ENCODE measurements at regions of chr18 and their contacts with region 1.

Region 1: DNA sequence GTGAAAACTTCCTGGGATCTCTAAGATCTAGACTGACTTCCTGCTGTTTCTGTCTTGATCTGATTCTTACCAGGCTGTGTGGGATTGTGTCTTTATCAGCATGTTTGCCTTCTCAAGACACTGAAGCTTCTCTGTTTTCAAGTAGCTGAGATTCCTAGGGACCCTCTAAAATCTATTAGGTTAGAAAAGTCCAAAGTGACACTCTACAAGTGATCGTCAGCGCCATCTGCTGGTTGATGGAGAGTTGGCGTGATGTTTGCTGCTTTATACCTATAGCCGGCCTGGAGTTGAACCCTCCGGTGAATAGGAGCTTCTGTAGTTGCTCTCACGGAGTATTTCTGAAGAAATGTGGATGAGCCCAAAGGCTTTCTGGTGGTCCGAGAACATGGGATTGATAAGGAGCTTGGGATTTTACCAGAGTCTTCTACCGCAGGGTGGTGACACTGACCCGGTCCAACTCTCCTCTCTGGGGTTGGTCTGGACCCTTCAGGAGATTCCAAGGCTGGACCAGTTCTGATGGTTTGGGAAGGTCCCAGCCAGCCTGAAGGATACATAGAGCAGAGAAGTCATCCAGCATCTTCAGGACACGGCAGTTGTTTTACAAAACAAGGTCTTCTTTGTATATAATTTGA is 96.0 kb upstream of the TTC39C start:
- DNase-seq: peak; percentile 79
- ATAC-seq: peak; percentile 70
- H3K4me3 ChIP-seq: no peak overlapping the region
- H3K4me3 Mint-ChIP-seq: no peak overlapping the region
- H3K27ac ChIP-seq: no peak overlapping the region
- H3K27ac Mint-ChIP-seq: no peak overlapping the region
- H3K4me1 ChIP-seq: peaks cover 0 to 6% of the 10 kb centered on the region in 2 donors
- H3K4me1 Mint-ChIP-seq: no peaks in the 10 kb centered on the region
- H3K27me3 ChIP-seq: no peaks in the 10 kb centered on the region
- H3K27me3 Mint-ChIP-seq: peaks cover 15% of the 10 kb centered on the region
- CTCF ChIP-seq: peak; percentile 97

Region 2: GRCh38 chr18:23619388-23619881 is 299.1 kb before region 1 on chr18:
- CTCF ChIA-PET with region 1: interaction called, 27 read pairs
- POLR2A ChIA-PET with region 1: no interaction called
- intact Hi-C with region 1: loop called (anchors 1 kb)
- DNase-seq: peak; percentile 34
- ATAC-seq: peak; percentile 33
- H3K4me3 ChIP-seq: peak overlapping the region; percentile 4 to 52 (median 38)
- H3K4me3 Mint-ChIP-seq: peak overlapping the region; percentile 77
- H3K27ac ChIP-seq: no peak overlapping the region
- H3K27ac Mint-ChIP-seq: no peak overlapping the region
- H3K4me1 ChIP-seq: peaks cover 12 to 15% of the 10 kb centered on the region in 2 donors
- H3K4me1 Mint-ChIP-seq: peaks cover 18% of the 10 kb centered on the region
- H3K27me3 ChIP-seq: peaks cover 0 to 34% (median 25%) of the 10 kb centered on the region in 4 experiments
- H3K27me3 Mint-ChIP-seq: peaks cover 48% of the 10 kb centered on the region
- CTCF ChIP-seq: no peak

Region 3: DNA sequence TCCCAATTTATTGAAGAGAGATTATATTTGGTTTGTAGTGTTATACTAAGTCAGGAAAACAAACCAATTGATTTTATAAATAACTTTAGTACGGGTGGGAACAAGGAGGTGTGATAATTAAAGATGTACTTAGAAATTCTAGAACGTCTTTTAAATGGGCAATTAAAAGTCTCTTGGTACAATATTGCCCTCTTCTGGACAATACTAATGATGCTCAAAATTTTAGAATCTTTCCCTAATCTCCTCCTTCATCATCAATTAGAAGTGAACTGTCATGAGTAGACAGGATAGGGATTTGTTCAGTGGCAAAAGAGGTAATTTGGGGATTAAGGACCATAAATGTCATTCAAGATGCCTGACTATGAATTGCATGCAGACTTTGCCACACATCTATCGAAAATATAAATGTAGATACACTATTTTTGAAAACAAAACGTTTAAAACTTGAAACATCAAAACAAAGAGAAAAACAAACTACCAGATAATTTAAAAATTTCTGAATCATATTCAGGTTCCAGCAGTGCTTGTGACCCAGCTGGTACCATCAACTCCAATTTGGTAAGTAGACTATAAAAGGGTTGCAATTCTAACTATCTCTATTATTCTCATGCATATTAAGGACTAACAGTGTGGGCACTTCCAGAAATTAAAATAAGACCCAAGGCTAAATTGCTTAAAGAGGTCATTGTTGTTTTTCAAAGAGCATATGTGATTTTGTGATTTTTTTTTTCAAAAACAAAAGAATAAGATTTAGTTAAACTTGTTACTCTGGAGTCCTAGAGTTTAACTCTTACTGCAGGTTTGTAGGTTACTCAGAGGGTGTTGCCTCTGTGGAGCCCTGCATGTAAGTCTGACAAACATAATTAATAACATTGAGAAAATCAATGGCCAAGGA is 105.7 kb before region 1 on chr18:
- CTCF ChIA-PET with region 1: interaction called, 5 read pairs
- POLR2A ChIA-PET with region 1: no interaction called
- intact Hi-C with region 1: loop called (anchors 1 kb)
- DNase-seq: peak; percentile 40
- ATAC-seq: peak; percentile 33
- H3K4me3 ChIP-seq: no peak overlapping the region
- H3K4me3 Mint-ChIP-seq: no peak overlapping the region
- H3K27ac ChIP-seq: no peak overlapping the region
- H3K27ac Mint-ChIP-seq: no peak overlapping the region
- H3K4me1 ChIP-seq: peaks cover 5 to 8% of the 10 kb centered on the region in 2 donors
- H3K4me1 Mint-ChIP-seq: peaks cover 8% of the 10 kb centered on the region
- H3K27me3 ChIP-seq: no peaks in the 10 kb centered on the region
- H3K27me3 Mint-ChIP-seq: peaks cover 5% of the 10 kb centered on the region
- CTCF ChIP-seq: peak; percentile 71

Region 4: DNA sequence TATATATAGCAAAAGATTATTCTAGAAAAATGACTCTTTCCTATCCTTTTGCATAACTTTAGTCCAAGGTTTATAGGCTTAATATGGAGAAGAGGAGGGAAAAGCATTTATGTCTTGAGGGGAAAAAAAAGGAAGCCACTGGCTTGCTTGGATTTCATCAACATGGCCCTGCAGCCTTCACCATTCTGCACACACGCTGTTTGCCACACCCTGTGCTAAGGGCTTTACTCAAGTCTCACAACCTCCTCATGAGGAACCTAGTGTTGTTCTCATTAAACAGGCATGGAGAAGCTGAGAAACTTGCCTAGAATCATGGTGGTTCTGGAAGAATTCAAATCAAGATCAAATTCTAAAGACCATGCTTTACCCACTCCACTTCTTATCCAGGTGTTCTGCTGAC is 21.2 kb before region 1 on chr18:
- CTCF ChIA-PET with region 1: interaction called, 10 read pairs
- POLR2A ChIA-PET with region 1: no interaction called
- intact Hi-C with region 1: no loop called
- DNase-seq: no peak
- ATAC-seq: no peak
- H3K4me3 ChIP-seq: no peak overlapping the region
- H3K4me3 Mint-ChIP-seq: no peak overlapping the region
- H3K27ac ChIP-seq: no peak overlapping the region
- H3K27ac Mint-ChIP-seq: no peak overlapping the region
- H3K4me1 ChIP-seq: no peaks in the 10 kb centered on the region
- H3K4me1 Mint-ChIP-seq: no peaks in the 10 kb centered on the region
- H3K27me3 ChIP-seq: no peaks in the 10 kb centered on the region
- H3K27me3 Mint-ChIP-seq: peaks cover 5% of the 10 kb centered on the region
- CTCF ChIP-seq: no peak

Region 5: DNA sequence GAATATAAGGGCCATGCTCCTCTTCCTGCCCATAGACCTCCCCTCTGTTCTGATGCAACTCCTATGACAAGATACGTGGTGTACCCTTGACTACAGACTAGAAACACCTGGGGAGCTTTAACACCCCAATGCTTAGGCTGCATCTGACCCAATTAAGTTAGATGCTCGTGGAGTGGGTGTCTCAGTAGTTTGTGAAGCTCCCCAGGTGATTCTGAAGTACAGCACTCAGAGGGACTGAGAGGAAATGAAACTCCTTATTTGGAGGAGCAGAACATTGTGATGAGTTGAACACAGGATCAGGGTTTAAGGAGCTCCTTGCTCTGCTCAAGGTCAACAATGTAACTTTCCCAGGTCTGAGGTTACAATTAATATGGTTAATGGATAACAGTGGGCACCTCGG is 15.7 kb after region 1 on chr18:
- CTCF ChIA-PET with region 1: interaction called, 10 read pairs
- POLR2A ChIA-PET with region 1: no interaction called
- intact Hi-C with region 1: no loop called
- DNase-seq: peak; percentile 36
- ATAC-seq: no peak
- H3K4me3 ChIP-seq: no peak overlapping the region
- H3K4me3 Mint-ChIP-seq: no peak overlapping the region
- H3K27ac ChIP-seq: no peak overlapping the region
- H3K27ac Mint-ChIP-seq: no peak overlapping the region
- H3K4me1 ChIP-seq: peaks cover 17 to 21% of the 10 kb centered on the region in 2 donors
- H3K4me1 Mint-ChIP-seq: peaks cover 25% of the 10 kb centered on the region
- H3K27me3 ChIP-seq: no peaks in the 10 kb centered on the region
- H3K27me3 Mint-ChIP-seq: no peaks in the 10 kb centered on the region
- CTCF ChIP-seq: no peak

Region 6: DNA sequence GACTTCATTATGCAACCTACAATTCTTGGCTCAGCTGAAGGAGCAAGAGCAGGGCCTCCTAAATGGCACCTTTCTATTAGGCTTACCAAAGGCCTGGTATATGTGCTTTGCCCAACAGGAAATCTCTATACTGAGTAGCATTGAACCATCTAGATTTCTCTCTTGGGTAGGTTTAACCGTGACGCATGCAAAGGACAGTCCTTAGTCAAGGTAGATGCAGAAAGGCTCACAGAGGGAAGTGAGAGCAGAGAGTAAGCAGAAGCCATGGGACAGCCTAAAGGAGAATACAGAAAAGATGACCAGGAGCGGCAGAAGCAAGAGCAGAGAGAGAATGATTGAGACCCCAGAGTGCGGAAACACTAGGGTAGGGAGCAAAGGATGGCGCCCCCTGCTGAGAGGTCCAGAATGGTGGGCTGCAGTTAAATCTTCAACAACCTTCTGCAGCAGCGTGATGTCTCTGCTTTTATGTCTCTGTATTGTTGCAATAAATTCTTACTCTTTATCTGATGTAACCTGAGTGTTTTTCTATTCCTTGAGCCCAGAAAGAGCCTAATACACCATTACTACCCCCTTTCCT is 483.8 kb after region 1 on chr18:
- CTCF ChIA-PET with region 1: no interaction called
- POLR2A ChIA-PET with region 1: no interaction called
- intact Hi-C with region 1: no loop called
- DNase-seq: no peak
- ATAC-seq: no peak
- H3K4me3 ChIP-seq: no peak overlapping the region
- H3K4me3 Mint-ChIP-seq: no peak overlapping the region
- H3K27ac ChIP-seq: no peak overlapping the region
- H3K27ac Mint-ChIP-seq: no peak overlapping the region
- H3K4me1 ChIP-seq: peaks cover 7 to 8% of the 10 kb centered on the region in 2 donors
- H3K4me1 Mint-ChIP-seq: peaks cover 6% of the 10 kb centered on the region
- H3K27me3 ChIP-seq: peaks cover 0 to 15% (median 6%) of the 10 kb centered on the region in 4 experiments
- H3K27me3 Mint-ChIP-seq: peaks cover 59% of the 10 kb centered on the region
- CTCF ChIP-seq: no peak

Measured in B cell (primary cell).